Posterior vena cava (tissue), 2 donors: ENCODE measurements at regions of chr18 and their contacts with region 1.

Region 1: DNA sequence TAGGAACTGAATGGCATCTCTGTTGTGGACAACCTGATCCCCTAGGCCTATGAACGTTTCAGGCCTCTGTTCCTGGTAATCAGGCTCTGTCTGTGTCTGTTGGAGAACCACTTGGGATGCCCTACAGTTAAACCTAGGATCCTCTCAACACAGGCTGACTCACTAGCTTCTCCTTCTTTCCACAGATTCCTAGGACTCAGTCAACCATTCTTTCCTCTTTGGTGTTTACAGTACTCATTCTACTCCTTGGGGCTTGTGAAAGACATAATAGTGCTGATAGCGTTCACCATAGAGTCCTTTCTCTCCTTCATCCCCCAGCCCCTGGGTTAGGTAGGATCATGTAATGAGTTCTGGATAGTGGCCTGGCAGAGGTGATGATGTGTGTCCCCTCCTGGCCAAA is 544.3 kb downstream of the METTL4 start:
- DNase-seq: no peak

Region 2: GRCh38 chr18:919078-919477 is 1107.9 kb before region 1 on chr18:
- intact Hi-C with region 1: loop called in 1 of 2 experiments (anchors 5 kb)
- DNase-seq: no peak

Region 3: DNA sequence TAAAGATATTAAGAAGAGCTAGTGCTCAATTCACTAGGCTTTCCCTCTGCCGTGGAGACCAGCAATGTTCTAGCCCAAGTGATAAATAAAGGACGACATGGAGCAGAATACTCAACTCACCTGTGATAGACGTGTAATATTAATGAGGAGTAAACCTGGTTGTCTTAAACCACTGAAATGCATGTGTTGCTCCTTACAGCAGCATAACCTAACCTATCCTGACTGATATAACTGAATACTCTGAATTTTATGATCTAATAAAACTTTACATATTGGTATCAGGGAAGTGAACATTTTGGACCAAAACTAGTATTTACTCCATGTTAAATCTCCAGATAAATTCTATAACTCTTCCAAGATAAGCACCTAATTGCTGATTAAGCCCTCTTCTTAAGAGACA is 13.3 kb after region 1 on chr18:
- intact Hi-C with region 1: no loop called
- DNase-seq: no peak

Region 4: GRCh38 chr18:2534906-2535305 is 507.9 kb after region 1 on chr18:
- intact Hi-C with region 1: loop called in 1 of 2 experiments (anchors 5 kb)
- DNase-seq: no peak